Activated CD4-positive, alpha-beta T cell treated with anti-CD3 and anti-CD28 coated beads for 36 hours (primary cell): ENCODE measurements at regions of chr1 and their contacts with region 1.

Region 1: DNA sequence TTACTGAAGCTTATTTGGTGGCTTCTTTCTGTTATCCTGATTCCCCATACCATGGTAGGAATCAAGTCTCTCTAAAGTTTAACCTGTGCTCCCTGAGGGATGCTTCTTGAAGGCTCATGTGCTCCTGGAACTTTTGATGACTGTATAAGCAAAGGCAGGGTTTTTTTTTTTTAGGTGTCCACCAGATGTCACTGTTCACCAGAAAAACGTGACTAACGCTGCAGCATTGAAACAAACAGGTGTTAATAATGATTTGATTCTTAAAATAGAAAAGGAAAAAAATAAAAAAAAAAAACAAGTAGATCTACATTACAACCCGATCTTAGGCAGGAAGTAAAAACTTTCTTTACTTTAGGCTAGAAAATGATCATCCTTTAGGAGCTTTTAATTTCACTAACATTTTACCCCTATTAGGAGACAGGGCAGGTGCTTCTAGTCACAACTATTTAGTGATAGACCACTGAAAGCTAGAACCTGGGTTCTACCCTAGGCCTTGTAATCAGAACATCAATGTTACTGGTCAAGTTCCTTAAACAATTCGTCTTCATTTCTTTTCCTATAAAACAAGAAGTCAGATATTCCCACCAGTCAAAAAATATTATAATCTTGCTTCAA is 223.0 kb downstream of the PLA2G4A start:
- DNase-seq: peak; percentile 28
- ATAC-seq: no peak
- H3K4me3 Mint-ChIP-seq: no peak overlapping the region
- H3K27ac Mint-ChIP-seq: no peak overlapping the region
- H3K4me1 Mint-ChIP-seq: no peaks in the 10 kb centered on the region
- H3K27me3 Mint-ChIP-seq: no peaks in the 10 kb centered on the region

Region 2: DNA sequence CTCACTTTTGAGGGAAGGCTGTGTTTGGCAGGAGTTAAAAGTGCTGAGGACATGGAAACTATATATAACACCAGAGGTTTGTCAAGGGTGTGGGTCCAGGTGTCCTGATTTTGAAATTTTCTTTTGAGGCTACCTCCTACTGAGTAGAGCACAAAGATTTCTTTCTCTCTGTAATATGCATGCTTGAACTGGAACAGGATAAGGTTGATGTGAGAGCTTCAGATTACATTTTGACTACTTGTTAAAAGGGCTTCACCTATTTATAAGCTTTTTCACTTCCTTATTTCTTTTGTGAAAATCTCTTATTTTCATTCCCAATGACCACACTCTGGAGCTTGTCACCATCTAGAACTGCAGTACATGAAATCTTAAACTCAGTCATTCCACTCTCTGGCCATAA is 282.8 kb before region 1 on chr1:
- CTCF ChIA-PET with region 1: no interaction called
- POLR2A ChIA-PET with region 1: no interaction called
- intact Hi-C with region 1: no loop called
- DNase-seq: no peak
- ATAC-seq: no peak
- H3K4me3 Mint-ChIP-seq: no peak overlapping the region
- H3K27ac Mint-ChIP-seq: no peak overlapping the region
- H3K4me1 Mint-ChIP-seq: no peaks in the 10 kb centered on the region
- H3K27me3 Mint-ChIP-seq: peaks cover 5% of the 10 kb centered on the region

Region 3: DNA sequence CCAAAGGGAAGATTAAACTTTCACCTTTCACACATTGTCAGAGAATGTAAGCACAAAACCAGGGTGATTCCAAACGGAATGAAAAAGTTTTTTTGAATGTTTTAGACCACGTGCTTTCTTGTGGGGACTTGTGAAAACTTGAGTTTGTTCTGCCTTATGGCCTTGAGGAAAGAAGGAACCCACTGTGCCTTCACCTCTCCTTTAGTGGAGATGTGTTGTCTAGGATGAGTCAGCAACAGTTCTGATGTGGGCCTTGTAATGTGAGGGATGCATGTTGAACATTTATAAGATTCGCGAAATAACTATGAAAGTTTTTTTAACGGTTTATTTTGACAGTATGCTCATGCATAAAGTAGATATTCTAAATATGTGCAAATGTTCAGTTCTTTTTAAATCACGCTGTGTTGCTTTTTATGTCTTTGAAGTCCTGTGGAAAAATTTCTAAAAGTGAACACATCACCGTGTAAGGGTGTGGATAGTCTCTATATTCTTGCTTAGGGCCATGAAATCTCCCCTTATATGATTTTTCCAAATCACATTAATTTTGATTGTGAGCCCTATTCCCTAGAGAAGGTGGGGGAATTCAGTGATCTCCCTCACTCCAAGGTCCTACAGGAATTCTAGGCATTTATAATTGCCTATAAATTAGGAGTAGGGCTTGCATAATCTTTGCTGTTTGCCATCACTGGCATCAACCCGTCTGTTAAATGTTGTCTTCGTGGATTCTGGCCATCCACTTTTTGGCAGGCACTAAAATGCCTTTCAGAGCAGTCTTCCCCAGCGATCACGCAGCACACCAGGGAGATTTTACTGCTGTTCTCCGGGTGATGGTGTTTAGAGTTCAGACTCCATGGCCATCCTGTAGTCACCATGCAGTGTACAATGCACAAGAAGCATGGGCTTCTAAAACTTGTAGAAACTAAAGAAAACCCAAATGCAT is 175.6 kb before region 1 on chr1:
- CTCF ChIA-PET with region 1: no interaction called
- POLR2A ChIA-PET with region 1: no interaction called
- intact Hi-C with region 1: no loop called
- DNase-seq: no peak
- ATAC-seq: no peak
- H3K4me3 Mint-ChIP-seq: no peak overlapping the region
- H3K27ac Mint-ChIP-seq: no peak overlapping the region
- H3K4me1 Mint-ChIP-seq: no peaks in the 10 kb centered on the region
- H3K27me3 Mint-ChIP-seq: peaks cover 3% of the 10 kb centered on the region

Region 4: DNA sequence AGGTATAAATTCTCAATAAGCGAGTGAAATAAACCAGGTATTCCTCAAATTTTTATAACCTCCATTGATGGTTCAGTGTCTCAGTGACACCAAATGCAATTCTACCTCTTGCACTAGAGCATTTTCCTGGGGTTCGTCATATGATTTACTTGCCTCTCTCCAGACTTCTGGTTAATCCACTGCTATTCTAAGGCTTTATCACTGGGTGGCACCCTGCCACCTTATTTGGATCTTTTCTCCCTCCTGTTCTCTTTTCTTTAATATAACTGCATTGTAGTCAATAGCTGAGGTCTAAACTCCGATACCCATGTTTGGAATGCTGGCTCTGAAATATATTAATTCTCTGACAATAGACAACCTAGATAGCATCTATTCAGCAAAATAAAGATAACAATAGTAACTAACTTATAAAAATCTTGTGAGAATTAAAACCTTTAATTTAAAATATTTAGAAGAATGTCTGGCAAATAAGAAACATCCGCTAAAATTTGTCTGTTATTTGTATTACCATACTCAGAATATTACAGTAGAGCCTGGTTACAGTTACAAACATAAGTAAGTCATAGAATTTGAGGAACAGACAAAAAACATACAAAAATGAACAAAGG is 213.4 kb after region 1 on chr1:
- CTCF ChIA-PET with region 1: no interaction called
- POLR2A ChIA-PET with region 1: no interaction called
- intact Hi-C with region 1: loop called in 1 of 2 experiments (anchors 10 kb)
- DNase-seq: peak; percentile 7
- ATAC-seq: no peak
- H3K4me3 Mint-ChIP-seq: no peak overlapping the region
- H3K27ac Mint-ChIP-seq: no peak overlapping the region
- H3K4me1 Mint-ChIP-seq: no peaks in the 10 kb centered on the region
- H3K27me3 Mint-ChIP-seq: no peaks in the 10 kb centered on the region

Region 5: DNA sequence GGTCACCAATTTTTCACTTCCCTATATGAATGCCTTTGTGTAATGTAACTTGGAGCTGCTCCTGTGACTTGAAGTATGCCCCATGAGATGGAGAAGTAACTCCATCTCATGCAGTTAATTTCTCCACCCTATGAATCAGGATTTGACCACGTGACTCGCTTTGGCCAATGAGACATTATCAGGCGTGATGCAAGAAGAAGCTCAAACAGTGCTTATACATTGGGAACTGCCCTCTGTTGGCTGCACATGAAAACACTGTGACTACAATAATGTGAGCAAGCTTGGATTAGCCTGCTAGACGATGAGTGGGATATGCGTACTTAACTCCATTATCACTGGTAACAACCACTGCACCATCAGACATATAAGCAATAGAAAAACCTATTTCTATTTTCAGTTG is 461.5 kb after region 1 on chr1:
- CTCF ChIA-PET with region 1: no interaction called
- POLR2A ChIA-PET with region 1: no interaction called
- intact Hi-C with region 1: loop called in 1 of 2 experiments (anchors 10 kb)
- DNase-seq: no peak
- ATAC-seq: no peak
- H3K4me3 Mint-ChIP-seq: no peak overlapping the region
- H3K27ac Mint-ChIP-seq: no peak overlapping the region
- H3K4me1 Mint-ChIP-seq: no peaks in the 10 kb centered on the region
- H3K27me3 Mint-ChIP-seq: no peaks in the 10 kb centered on the region